ENCODE measurements at regions of chr16 and their contacts with region 1.

Region 1: DNA sequence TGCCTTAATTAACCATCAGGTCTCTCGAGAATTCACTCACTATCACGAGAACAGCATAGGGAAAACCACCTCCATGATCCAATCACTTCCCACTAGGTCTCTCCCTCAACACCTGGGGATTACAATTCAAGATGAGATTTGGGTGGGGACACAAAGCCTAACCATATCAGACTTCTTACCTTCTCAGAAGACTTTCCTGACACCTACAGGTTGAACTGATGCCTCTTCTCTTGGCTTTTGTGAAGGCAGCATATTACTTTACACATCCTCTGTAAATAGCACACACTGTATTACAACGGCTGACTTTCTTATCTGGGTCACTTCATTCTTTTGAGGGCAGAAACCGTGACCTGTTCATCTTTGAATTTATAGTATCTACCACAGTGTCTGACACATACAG is 23.6 kb downstream of the BMERB1 start:
- DNase-seq: no peak
- H3K4me3 ChIP-seq: no peak overlapping the region
- H3K27me3 ChIP-seq: no peaks in the 10 kb centered on the region
- CTCF ChIP-seq: no peak

Region 2: DNA sequence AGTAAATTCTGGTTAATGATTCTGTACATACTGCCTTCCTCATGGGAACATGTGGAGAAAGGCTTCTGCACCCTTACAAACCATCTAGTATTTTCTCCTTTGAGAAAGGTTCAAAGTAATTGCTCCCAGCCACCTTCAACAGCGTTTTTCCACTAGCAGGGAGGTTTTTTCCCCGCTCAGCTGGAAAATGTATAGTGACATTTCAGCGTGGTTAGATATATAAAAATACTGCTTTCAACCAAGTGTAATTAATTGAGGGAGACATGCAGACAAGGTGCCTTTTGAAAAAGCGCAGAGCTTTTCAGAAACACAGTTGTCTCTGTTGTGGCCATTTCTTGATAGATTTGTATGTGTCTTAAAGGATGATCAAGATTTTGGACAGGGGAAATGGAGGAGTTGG is 18.4 kb before region 1 on chr16:
- CTCF ChIA-PET with region 1: interaction called, 5 read pairs
- POLR2A ChIA-PET with region 1: interaction called, 24 read pairs
- DNase-seq: no peak
- H3K4me3 ChIP-seq: no peak overlapping the region
- H3K27me3 ChIP-seq: no peaks in the 10 kb centered on the region
- CTCF ChIP-seq: no peak